ENCODE measurements at regions of chr4 and their contacts with region 1.

Region 1: GRCh38 chr4:145936142-145936996 is 2.3 kb downstream of the ZNF827 start:
- DNase-seq: peak; percentile 92
- H3K4me3 ChIP-seq: peak overlapping the region; percentile 71 to 91 (median 84)
- H3K27ac ChIP-seq: peak overlapping the region; percentile 89 to 96 (median 96)
- H3K4me1 ChIP-seq: peaks cover 15 to 50% (median 35%) of the 10 kb centered on the region in 4 donors
- H3K27me3 ChIP-seq: no peaks in the 10 kb centered on the region
- CTCF ChIP-seq: peak in 1 of 3 experiments; percentile 30
- EP300 ChIP-seq: no peak
- POLR2A ChIP-seq: no peak

Region 2: GRCh38 chr4:145732895-145733880 is 203.2 kb before region 1 on chr4:
- intact Hi-C with region 1: loop called (anchors 2 kb)
- DNase-seq: peak; percentile 95
- H3K4me3 ChIP-seq: peak overlapping the region; percentile 64 to 74 (median 65)
- H3K27ac ChIP-seq: peak overlapping the region; percentile 94 to 100 (median 98)
- H3K4me1 ChIP-seq: peaks cover 42 to 66% (median 64%) of the 10 kb centered on the region in 4 donors
- H3K27me3 ChIP-seq: no peaks in the 10 kb centered on the region
- CTCF ChIP-seq: peak in 2 of 3 experiments; percentile 7 to 17
- EP300 ChIP-seq: peak; percentile 24
- POLR2A ChIP-seq: peak; percentile 84

Region 3: DNA sequence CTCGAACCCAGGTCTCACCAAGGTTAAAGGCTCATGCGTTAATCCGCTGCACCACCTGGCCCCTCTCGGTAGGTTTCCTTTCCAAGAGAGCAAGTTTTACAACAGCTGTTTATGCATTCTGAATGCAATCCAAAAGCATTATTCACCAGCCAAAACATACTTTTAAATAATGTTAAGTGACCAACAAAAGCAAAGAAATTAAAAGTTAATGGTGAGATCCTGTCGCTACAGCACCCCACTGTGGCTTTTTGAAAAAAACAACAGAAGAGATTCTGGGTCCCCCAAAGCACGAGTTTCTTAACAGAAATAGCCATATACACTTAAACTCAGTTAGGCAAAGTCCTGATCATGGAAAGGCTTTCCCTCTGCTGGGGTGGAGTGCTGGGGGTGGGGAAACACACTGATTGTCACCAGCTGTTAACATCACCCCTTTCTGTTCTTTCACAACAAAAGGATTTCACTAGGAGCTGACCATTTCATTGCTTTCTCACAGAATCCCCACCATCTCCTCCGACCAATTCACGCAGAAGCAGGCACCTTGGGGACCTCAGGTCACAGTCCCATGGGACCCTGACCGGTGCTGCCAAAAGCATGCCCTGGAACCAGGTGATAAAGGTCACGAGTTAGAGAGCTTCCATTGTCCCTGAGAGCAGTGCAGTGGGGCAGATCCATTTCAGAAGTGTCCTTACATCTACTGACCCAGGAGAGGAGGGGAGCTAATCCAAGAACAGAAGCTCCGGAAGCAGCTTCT is 49.0 kb before region 1 on chr4:
- intact Hi-C with region 1: loop called (anchors 2 kb)
- DNase-seq: no peak
- H3K4me3 ChIP-seq: no peak overlapping the region
- H3K27ac ChIP-seq: peak overlapping the region; percentile 39 to 70 (median 58)
- H3K4me1 ChIP-seq: peaks cover 24 to 30% (median 24%) of the 10 kb centered on the region in 4 donors
- H3K27me3 ChIP-seq: no peaks in the 10 kb centered on the region
- CTCF ChIP-seq: peak in 1 of 3 experiments; percentile 5
- EP300 ChIP-seq: no peak
- POLR2A ChIP-seq: no peak

Region 4: DNA sequence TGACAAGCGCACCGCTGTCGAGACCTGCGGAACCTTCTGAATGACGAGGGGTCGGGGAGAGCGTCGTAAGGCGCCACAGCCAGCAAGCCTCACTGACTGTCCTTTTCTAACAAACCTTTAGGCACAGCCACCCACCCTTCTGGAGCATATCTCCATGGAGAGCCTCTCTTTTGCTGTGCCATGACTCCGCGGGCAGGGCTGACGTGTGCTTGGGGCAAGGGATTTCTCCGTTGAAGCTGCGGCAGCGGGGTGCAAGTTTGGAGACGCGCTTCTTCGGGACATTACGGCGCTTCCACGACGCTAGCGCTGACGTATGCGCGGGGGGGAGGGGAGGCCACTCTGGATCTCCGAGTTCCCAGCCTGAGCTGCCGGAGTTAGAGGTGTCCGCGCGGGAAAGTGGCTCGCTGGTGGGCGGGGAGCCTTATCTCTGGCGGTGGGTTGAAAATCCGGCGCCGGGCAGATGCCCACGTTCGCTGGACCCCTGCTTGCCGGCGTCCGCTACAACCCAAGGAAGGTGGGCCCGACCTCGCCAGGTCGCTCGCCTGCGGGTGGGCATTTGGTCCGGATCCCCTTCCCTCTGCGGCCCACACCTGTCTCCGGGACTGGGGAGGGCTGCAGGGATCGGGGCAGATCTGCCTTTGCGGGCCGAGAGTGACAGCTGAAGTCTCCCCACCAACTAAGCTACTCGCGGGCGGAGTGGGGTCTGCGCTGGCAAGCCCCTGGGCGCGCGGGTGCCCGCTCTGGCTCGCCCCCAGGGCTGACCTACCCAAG is 585.9 kb after region 1 on chr4:
- intact Hi-C with region 1: loop called (anchors 10 kb)
- DNase-seq: peak; percentile 96
- H3K4me3 ChIP-seq: peak overlapping the region; percentile 74 to 94 (median 82)
- H3K27ac ChIP-seq: peak overlapping the region; percentile 77 to 84 (median 82)
- H3K4me1 ChIP-seq: peaks cover 0 to 27% (median 24%) of the 10 kb centered on the region in 4 donors
- H3K27me3 ChIP-seq: no peaks in the 10 kb centered on the region
- CTCF ChIP-seq: no peak
- EP300 ChIP-seq: no peak
- POLR2A ChIP-seq: no peak